Endothelial cell of umbilical vein (primary cell): ENCODE measurements at regions of chr11 and their contacts with region 1.

Region 1: DNA sequence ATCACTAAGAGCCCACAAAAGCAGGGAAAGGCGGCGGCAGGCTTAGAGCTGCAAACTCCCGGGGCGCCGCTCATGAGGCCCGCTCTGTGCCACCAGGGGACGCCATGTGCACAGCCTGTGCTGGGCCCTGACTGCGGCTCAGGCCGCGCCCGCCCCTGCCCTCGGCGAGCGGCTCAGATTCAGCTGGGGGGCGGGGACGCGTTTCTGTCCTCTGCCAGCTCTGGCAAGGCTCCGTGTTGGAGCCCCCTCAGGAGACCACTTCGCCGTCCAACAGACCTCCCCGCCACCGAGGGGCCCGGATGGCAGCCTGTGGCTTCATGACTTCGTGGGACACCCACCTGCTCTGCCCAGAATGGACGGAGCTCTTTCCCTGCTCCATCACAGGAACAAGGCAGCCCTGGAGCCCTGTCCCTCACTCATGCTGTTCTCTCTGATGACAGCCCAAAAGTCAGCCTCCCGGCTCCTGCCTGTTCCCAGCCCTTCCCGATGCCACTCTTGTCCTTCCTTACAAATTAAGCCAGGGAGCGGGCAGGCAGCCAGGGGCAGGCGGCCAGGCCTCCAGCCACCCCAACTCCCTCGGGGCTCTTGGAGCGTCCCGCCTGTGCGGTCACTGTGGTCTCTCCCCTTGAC is 69.1 kb downstream of the NAT10 start:
- DNase-seq: peak; percentile 55
- H3K4me3 ChIP-seq: no peak overlapping the region
- H3K27ac ChIP-seq: no peak overlapping the region
- H3K4me1 ChIP-seq: peaks cover 3% of the 10 kb centered on the region
- H3K27me3 ChIP-seq: peaks cover 3 to 5% of the 10 kb centered on the region in 2 experiments
- CTCF ChIP-seq: peak; percentile 78 to 99
- POLR2A ChIP-seq: no peak

Region 2: DNA sequence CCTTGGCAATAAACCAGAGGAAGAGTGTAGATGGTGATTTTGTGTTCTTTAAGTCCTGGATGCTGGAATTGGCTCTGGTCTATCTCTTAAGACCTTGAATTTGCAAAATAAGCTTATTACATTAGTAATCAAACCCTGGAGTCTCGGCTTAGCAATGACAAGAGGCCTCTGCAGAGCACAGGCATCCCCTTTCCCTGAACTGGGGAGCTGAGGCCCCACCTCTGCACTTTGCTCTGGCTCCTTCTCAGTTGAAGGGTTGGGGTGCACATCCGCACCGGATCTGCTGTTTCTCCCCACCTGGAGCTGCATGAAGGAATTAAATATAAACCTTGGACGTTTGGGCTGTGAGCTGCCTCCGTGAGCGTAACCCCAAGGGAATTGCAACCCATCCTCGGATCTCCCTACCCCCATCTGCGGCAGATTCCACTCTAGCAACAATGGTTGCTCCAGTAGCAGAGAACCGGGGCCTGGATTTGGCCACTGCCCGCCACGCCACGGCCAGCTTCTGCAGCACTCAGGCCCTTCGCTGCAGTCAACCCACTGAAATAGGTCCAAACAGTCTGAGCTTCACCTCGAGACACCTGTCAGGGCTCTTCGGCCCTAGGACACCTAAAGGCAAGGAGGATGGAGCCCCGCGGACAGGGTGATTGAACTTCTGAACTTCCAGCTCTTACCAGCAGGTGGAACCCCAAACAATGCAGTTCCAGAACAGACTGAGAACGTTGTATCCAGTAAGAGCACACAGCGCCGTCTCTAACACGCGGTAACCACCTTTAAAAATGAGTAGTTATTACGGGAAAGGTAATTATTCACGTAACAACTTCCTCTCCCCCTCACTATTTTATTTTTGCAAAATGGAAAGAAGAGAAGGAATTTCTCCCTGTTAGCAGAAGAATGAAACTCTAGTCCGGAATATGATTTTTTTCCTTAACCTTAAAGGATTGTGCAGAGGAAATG is 177.8 kb before region 1 on chr11:
- CTCF ChIA-PET with region 1: interaction called, 7 read pairs
- POLR2A ChIA-PET with region 1: no interaction called
- dilution Hi-C with region 1: no loop called
- intact Hi-C with region 1: loop called (anchors 2 kb)
- DNase-seq: peak; percentile 75
- H3K4me3 ChIP-seq: no peak overlapping the region
- H3K27ac ChIP-seq: no peak overlapping the region
- H3K4me1 ChIP-seq: no peaks in the 10 kb centered on the region
- H3K27me3 ChIP-seq: peaks cover 20 to 27% of the 10 kb centered on the region in 2 experiments
- CTCF ChIP-seq: peak; percentile 63 to 77
- POLR2A ChIP-seq: no peak

Region 3: DNA sequence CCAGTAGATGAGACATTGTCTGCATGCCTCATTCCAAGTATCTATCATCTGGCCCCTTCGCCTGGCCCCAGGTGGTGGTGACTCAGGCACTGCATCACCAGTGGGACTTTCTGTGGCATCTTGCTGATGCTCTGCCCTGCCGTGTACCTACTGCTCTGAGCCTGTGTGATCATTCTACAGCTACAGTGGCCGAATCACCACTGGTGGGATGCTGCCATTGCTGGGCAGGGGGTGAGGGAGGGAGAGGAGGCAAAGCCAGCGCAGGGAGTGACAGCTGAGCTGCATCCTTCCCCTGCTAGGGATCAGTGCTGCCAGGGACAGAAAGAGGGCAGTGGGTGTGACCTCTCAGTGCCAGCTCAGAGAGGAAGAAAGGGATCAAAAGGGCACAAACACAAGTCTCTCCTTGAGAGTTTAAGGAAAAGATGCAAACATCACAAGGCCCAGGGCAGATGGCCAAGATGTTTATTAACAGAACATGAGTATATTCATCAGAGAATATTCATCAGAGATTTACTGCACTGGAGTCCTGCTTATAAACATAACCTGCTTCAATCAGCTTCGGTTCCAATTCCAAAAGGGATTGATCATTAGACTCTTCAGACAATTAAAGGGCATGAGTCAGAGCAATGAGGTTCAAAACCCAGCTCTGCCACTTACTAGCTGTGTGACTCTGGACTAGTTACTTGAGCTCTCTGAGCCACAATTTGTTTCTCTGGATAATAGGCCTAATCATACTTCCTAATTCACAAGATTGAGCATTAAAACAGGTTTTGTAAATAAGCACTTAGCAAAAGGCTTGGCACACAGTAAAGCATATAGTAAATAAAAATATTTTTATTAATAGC is 40.7 kb after region 1 on chr11:
- CTCF ChIA-PET with region 1: interaction called, 3 read pairs
- POLR2A ChIA-PET with region 1: no interaction called
- dilution Hi-C with region 1: no loop called
- intact Hi-C with region 1: loop called (anchors 2 kb)
- DNase-seq: no peak
- H3K4me3 ChIP-seq: no peak overlapping the region
- H3K27ac ChIP-seq: no peak overlapping the region
- H3K4me1 ChIP-seq: no peaks in the 10 kb centered on the region
- H3K27me3 ChIP-seq: no peaks in the 10 kb centered on the region
- CTCF ChIP-seq: no peak
- POLR2A ChIP-seq: no peak

Region 4: DNA sequence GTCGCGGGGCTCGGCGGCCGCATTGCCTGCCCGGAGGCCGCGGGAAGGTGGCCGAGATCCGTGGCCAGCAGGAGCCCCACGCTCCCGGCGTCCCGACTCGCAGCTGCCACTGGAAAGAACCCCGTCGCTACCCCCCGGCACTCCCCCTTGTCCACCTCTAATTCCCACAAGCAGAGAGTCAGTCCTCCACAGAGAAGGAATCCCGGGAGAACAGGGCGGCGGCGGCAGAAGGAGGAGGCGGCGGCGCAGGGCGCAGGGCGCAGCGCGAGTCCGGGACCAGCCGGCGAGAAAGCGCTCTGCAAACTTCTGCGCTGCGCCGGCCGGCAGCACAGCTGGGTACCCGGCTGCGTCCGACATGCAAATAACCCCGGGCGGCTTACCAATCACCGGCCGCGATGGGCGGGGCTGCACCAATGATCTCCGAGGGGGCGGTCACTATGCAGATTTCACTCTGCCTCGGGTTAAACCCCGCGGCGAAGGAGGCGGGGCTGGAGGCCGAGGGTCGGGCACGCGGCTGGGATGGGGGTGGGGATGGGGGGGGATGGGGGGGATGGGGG is 183.3 kb after region 1 on chr11 and contains the start of gene ABTB2:
- CTCF ChIA-PET with region 1: interaction called, 97 read pairs
- POLR2A ChIA-PET with region 1: interaction called, 6 read pairs
- dilution Hi-C with region 1: no loop called
- intact Hi-C with region 1: loop called (anchors 1 kb)
- DNase-seq: peak; percentile 96
- H3K4me3 ChIP-seq: peak within 1 kb of the TSS in 2 of 3 experiments; percentile 26 to 29
- H3K27ac ChIP-seq: no peak within 1 kb of the TSS
- H3K4me1 ChIP-seq: peaks cover 14% of the 10 kb centered on the region
- H3K27me3 ChIP-seq: peaks cover 24 to 40% of the 10 kb centered on the region in 2 experiments
- CTCF ChIP-seq: no peak
- POLR2A ChIP-seq: peak; percentile 69
- total RNA-seq, gene ABTB2: 0.11 and 0.25 TPM in 2 replicates

Region 5: DNA sequence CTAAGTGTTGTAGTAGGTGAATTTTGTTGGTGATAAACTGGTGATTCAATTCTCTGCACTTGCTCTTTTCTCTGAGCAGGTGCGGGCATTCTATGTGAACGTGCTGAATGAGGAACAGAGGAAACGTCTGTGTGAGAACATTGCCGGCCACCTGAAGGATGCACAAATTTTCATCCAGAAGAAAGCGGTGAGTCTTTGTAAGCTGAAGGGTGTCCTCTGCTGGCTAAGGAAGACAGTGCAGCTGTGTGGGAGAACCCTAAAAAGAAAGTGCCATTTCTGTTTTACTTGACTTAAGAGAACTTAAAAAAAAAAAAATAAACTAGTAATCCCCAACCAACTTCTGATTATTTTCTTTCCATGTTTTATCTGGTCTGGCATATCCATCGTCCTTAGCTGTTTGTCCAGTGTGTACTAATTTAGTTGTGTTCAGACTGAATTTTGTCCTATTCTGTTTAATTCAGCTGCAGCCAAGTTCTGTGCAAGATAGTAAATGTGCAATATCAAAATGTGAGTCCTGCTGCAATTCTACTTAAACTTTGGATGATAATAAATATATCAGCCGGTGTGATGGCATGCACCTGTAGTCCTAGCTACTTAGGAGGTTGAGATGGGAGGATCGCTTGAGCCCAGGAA is 293.8 kb after region 1 on chr11:
- CTCF ChIA-PET with region 1: interaction called, 18 read pairs
- POLR2A ChIA-PET with region 1: no interaction called
- dilution Hi-C with region 1: no loop called
- intact Hi-C with region 1: no loop called
- DNase-seq: peak; percentile 21
- H3K4me3 ChIP-seq: no peak overlapping the region
- H3K27ac ChIP-seq: no peak overlapping the region
- H3K4me1 ChIP-seq: no peaks in the 10 kb centered on the region
- H3K27me3 ChIP-seq: no peaks in the 10 kb centered on the region
- CTCF ChIP-seq: peak; percentile 30 to 54
- POLR2A ChIP-seq: no peak